Calu3 (cell line): ENCODE measurements at regions of chr5 and their contacts with region 1.

Region 1: GRCh38 chr5:151033217-151033934 is 13.0 kb downstream of the GPX3 start:
- DNase-seq: no peak
- H3K4me3 Mint-ChIP-seq: no peak overlapping the region
- H3K27ac Mint-ChIP-seq: no peak overlapping the region
- H3K4me1 Mint-ChIP-seq: peaks cover 7% of the 10 kb centered on the region
- H3K27me3 Mint-ChIP-seq: no peaks in the 10 kb centered on the region
- CTCF ChIP-seq: no peak

Region 2: GRCh38 chr5:150918613-150919012 is 114.8 kb before region 1 on chr5:
- CTCF ChIA-PET with region 1: interaction called, 11 read pairs
- intact Hi-C with region 1: no loop called
- DNase-seq: no peak
- H3K4me3 Mint-ChIP-seq: no peak overlapping the region
- H3K27ac Mint-ChIP-seq: no peak overlapping the region
- H3K4me1 Mint-ChIP-seq: no peaks in the 10 kb centered on the region
- H3K27me3 Mint-ChIP-seq: no peaks in the 10 kb centered on the region
- CTCF ChIP-seq: no peak